Right ventricle myocardium inferior (tissue), 1 donor: ENCODE measurements at regions of chr2 and their contacts with region 1.

Region 1: GRCh38 chr2:28681158-28681571 is 70.5 kb upstream of the PPP1CB start:
- DNase-seq: no peak
- ATAC-seq: no peak

Region 2: GRCh38 chr2:28342081-28342967 is 338.8 kb before region 1 on chr2:
- intact Hi-C with region 1: no loop called
- DNase-seq: peak; percentile 77
- ATAC-seq: peak; percentile 69

Region 3: GRCh38 chr2:28594289-28595108 is 86.7 kb before region 1 on chr2:
- intact Hi-C with region 1: loop called (anchors 5 kb)
- DNase-seq: peak; percentile 94
- ATAC-seq: peak; percentile 75

Region 4: DNA sequence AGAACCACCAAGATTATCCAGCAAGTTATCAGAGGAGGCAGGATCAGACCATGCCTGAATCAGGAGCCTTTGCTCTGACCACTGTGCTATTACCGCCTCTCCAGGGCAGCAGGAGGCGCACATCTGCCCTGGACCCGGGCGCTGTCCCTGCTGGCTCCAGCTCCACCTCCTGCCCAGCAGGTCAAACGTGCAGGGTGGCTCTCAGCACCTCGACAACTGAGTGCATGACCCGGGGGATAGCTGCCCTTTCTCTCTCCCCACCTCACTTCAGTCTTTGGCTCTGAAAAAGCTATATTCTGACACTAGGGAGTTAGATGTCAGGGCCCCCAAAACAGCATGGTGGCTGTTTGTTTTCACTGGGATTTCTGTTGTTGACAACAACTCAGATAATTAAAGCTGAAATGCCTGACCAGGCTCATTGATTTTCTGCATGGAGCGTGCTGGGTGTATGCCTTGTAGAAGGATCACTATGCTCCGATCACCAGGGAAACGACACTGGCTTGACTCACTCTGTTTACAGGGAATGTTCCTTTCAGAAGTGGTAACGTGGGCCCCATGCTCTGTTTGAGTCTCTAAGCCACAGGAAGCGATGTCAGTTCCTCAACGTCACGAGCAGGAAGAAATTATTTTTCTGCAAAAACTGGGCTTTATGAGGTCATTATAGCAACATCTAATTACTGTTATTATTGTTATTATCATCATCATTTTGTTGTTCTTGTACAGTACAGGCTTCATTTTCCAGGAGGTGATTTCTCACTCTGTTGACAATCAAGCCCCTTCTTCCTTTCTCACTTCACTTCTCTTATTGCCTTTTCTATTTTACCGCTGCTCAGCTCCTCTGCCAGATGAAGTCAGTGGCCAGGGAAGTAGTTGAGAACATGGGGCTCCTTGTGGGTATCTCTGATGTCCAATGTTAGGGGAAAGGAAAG is 59.7 kb before region 1 on chr2:
- intact Hi-C with region 1: loop called (anchors 5 kb)
- DNase-seq: no peak
- ATAC-seq: peak; percentile 67